ENCODE measurements at regions of chr12 and their contacts with region 1.

Region 1: GRCh38 chr12:47021298-47021697 is 58.1 kb upstream of the PCED1B start:
- DNase-seq: peak; percentile 64
- H3K4me3 ChIP-seq: no peak overlapping the region
- CTCF ChIP-seq: peak; percentile 47

Region 2: DNA sequence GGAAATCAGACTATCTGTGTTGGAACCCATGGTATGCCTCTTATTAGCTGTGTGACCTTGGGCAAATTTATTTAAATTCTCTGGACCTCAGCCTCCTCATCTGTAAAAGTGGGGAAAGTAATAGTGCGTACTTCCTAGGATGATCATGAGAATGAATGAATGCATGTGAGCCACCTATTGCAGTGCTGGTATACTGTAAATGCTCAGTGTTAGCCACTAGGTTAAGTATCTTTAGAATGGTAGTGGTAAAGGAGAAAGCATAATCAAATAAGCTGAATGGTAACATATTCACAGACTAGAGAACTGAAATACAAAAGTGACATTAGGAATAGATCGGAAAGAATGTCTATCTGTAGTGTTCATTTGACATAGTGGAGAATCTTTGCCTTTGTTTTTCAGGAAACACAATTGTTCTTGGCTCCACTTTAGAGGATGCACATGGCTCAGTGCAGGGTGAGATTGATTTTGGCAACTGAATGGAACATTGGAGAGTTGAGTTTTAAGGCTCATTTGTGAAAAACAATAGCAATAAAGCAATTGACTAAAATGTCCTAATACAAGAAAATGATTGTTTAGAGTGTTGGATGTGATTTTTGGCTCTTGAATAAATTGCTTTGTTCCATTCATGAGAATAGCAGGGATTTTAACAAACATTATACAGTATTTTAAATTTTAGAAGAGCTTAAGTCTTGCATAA is 869.0 kb before region 1 on chr12:
- CTCF ChIA-PET with region 1: interaction called, 10 read pairs
- POLR2A ChIA-PET with region 1: no interaction called
- DNase-seq: no peak
- H3K4me3 ChIP-seq: no peak overlapping the region
- CTCF ChIP-seq: no peak

Region 3: GRCh38 chr12:46682148-46682547 is 339.1 kb before region 1 on chr12:
- CTCF ChIA-PET with region 1: interaction called, 49 read pairs
- POLR2A ChIA-PET with region 1: no interaction called
- DNase-seq: no peak
- H3K4me3 ChIP-seq: no peak overlapping the region
- CTCF ChIP-seq: no peak

Region 4: GRCh38 chr12:46944088-46944487 is 77.2 kb before region 1 on chr12:
- CTCF ChIA-PET with region 1: interaction called, 19 read pairs
- POLR2A ChIA-PET with region 1: no interaction called
- DNase-seq: no peak
- H3K4me3 ChIP-seq: no peak overlapping the region
- CTCF ChIP-seq: peak; percentile 34

Region 5: GRCh38 chr12:46998811-46999368 is 22.4 kb before region 1 on chr12:
- CTCF ChIA-PET with region 1: interaction called, 10 read pairs
- POLR2A ChIA-PET with region 1: no interaction called
- DNase-seq: no peak
- H3K4me3 ChIP-seq: no peak overlapping the region
- CTCF ChIP-seq: no peak

Measured in AG04449 (cell line).